ENCODE measurements at regions of chr7 and their contacts with region 1.

Region 1: DNA sequence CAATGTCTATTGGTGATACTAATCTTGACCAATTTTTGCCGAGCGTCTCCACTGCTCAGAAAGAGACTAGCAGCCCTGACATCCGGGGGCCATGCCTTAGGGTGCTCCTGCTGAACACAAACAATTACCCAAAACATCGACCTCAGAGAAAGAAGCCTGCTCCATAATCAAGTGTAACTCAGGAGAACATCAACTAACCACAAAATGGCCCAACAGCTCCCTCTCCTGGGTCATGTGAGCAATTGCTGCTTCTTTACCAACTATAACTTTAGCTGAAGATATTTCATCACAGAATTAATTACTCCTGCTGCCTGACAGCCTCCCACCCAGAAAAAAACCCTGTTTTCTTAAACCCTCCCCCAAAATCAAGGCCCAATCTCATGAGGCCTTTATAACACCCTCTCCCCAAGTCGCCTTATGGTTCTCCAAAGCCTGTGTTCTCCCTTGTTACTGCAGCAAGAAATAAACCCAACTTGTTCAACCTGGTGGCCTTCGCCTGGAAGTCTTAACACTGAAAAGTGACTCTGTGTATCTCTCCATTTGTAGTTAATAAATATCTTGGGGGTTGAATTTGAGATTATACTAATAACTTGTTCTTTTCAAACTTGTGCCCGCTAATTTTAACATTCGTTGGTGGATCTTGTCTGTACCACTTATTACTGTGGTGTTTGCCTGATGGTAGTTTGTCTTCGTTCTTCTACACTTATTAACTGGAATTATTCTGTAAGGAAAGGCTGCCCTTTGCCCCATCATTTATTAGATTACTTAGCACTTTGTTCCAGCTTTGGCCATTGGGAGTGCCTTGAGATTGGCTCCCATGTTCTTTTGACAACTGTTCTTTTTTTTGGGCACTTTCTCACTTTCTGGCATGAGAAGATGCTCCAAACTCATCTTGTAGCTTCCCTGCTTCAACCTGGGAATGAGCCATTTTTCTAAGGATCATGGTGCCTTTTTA is 21.2 kb upstream of the RAMP3 start:
- DNase-seq: peak; percentile 76 to 90
- ATAC-seq: peak; percentile 77 to 90
- H3K4me3 ChIP-seq: no peak overlapping the region
- H3K27ac ChIP-seq: no peak overlapping the region
- H3K4me1 ChIP-seq: no peaks in the 10 kb centered on the region
- CTCF ChIP-seq: peak; percentile 92
- EP300 ChIP-seq: no peak
- POLR2A ChIP-seq: no peak
- RAD21 ChIP-seq: peak; percentile 92 to 95

Region 2: DNA sequence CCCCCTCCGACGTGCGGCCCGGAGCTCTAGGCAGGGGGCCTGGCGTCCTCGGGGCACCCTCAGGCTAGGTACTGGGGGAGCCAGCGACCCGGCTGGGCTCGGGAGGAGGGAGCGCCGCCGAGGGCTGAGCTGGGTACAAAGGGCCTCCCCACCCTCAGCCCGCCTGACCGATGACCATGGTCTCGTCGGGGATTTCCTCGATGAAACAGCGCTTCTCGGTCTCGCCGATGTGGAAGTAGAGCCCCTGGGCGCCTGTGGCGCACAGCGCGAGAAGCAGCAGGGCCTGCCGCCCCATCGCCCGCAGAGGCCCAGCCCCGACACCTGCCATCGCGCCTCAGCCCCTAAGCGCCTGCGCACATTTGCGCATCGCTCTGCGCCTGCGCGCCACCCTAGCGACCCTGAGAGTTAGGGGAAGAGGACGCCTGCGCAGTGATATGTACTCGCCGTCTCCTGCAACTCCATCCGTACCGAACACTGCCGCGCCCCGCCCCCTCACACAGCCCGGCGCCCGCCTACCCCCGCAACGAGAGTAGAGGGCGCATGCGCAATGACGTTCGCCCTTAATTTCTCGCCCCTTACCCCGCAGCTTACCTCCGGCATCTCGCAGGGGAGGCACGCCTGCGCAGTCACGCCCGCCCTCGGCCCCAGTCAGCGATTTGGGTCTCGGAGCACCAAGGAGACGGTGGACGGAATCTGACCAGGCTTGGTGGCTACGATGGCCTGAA is 554.3 kb before region 1 on chr7 and contains the start of gene TMED4:
- CTCF ChIA-PET with region 1: interaction called, 26 read pairs
- POLR2A ChIA-PET with region 1: interaction called, 4 read pairs
- DNase-seq: peak; percentile 98 to 99
- ATAC-seq: peak; percentile 94
- H3K4me3 ChIP-seq: peak within 1 kb of the TSS; percentile 94
- H3K27ac ChIP-seq: peak within 1 kb of the TSS; percentile 94 to 95
- H3K4me1 ChIP-seq: peaks cover 16% of the 10 kb centered on the region
- CTCF ChIP-seq: no peak
- EP300 ChIP-seq: no peak
- POLR2A ChIP-seq: peak; percentile 93
- RAD21 ChIP-seq: no peak
- polyA plus RNA-seq, gene TMED4: 68.3 and 79.2 TPM in 2 replicates

Region 3: GRCh38 chr7:44858161-44858560 is 278.2 kb before region 1 on chr7:
- CTCF ChIA-PET with region 1: interaction called, 28 read pairs
- POLR2A ChIA-PET with region 1: interaction called, 6 read pairs
- DNase-seq: no peak
- ATAC-seq: no peak
- H3K4me3 ChIP-seq: no peak overlapping the region
- H3K27ac ChIP-seq: no peak overlapping the region
- H3K4me1 ChIP-seq: peaks cover 11% of the 10 kb centered on the region; the same call in 1 of the 3 replicates
- CTCF ChIP-seq: no peak
- EP300 ChIP-seq: no peak
- POLR2A ChIP-seq: no peak
- RAD21 ChIP-seq: no peak

Region 4: GRCh38 chr7:45111298-45112223 is 24.8 kb before region 1 on chr7 and contains the start of gene TBRG4:
- CTCF ChIA-PET with region 1: interaction called, 37 read pairs
- POLR2A ChIA-PET with region 1: interaction called, 16 read pairs
- DNase-seq: peak; percentile 85 to 97
- ATAC-seq: peak; percentile 94 to 96
- H3K4me3 ChIP-seq: peak within 1 kb of the TSS; percentile 86
- H3K27ac ChIP-seq: peak within 1 kb of the TSS; percentile 92 to 96
- H3K4me1 ChIP-seq: peaks cover 28% of the 10 kb centered on the region
- CTCF ChIP-seq: peak; percentile 61
- EP300 ChIP-seq: no peak
- POLR2A ChIP-seq: peak; percentile 94
- RAD21 ChIP-seq: peak in 1 of 2 experiments; percentile 23; a peak in 3 of 5 replicates
- polyA plus RNA-seq, gene TBRG4: 100 and 135 TPM in 2 replicates

Region 5: GRCh38 chr7:45146531-45147379 is 10.4 kb after region 1 on chr7:
- CTCF ChIA-PET with region 1: interaction called, 13 read pairs
- POLR2A ChIA-PET with region 1: no interaction called
- DNase-seq: no peak
- ATAC-seq: peak in 1 of 2 experiments; percentile 26; a peak in 1 of 6 replicates
- H3K4me3 ChIP-seq: no peak overlapping the region
- H3K27ac ChIP-seq: no peak overlapping the region
- H3K4me1 ChIP-seq: no peaks in the 10 kb centered on the region
- CTCF ChIP-seq: no peak
- EP300 ChIP-seq: no peak
- POLR2A ChIP-seq: no peak
- RAD21 ChIP-seq: no peak

Region 6: GRCh38 chr7:45347804-45348412 is 211.5 kb after region 1 on chr7:
- CTCF ChIA-PET with region 1: no interaction called
- POLR2A ChIA-PET with region 1: no interaction called
- DNase-seq: peak; percentile 10 to 24
- ATAC-seq: no peak
- H3K4me3 ChIP-seq: no peak overlapping the region
- H3K27ac ChIP-seq: no peak overlapping the region
- H3K4me1 ChIP-seq: 0 out of 3 replicates have a peak, but pooled peaks cover 3% of the 10 kb centered on the region
- CTCF ChIP-seq: no peak
- EP300 ChIP-seq: no peak
- POLR2A ChIP-seq: no peak
- RAD21 ChIP-seq: no peak